IMR-90 (cell line): ENCODE measurements at regions of chr4 and their contacts with region 1.

Region 1: DNA sequence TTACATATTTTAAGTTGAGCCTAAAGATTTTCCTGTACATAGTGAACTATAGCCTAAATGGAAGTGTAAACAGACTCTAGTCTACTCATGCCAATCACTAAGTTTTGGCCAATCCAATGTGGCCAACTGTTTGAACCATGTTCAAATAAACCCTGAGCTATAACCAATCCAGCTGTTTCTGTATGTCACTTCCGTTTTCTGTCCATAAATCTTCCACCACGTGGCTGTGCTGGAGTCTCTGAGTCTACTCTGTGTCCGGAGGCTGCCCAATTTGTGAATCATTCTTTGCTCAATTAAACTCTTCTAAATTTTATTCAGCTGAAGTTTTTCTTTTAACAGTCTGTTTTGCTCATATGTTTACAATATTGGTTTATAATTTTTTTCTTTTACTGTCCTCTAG is 112.4 kb upstream of the BANK1 start:
- DNase-seq: no peak
- ATAC-seq: no peak
- H3K4me3 ChIP-seq: no peak overlapping the region
- H3K27ac ChIP-seq: no peak overlapping the region
- H3K4me1 ChIP-seq: no peaks in the 10 kb centered on the region
- H3K27me3 ChIP-seq: no peaks in the 10 kb centered on the region
- CTCF ChIP-seq: no peak
- POLR2A ChIP-seq: no peak
- RAD21 ChIP-seq: no peak

Region 2: DNA sequence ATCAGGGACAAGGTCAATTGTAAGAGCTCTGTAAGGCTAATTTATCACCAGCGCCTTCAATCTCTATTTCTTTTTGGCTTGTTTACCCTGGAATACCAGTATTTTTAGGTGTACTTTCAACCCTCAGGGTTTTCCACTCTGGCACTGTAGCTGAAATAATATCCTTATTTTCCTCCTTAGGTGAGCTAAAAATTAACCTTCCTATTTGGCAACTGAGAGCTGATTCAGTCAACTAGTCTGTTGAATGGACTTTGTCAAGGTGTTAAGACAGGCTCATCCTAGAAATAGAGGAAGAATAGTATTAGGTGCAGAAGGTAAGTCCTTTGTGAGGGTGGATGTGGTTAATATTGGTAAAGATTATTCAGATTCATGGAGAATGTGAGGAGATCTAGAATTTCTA is 11.1 kb after region 1 on chr4:
- CTCF ChIA-PET with region 1: interaction called, 10 read pairs
- POLR2A ChIA-PET with region 1: no interaction called
- dilution Hi-C with region 1: no loop called
- in situ Hi-C with region 1: no loop called
- intact Hi-C with region 1: no loop called
- DNase-seq: no peak
- ATAC-seq: no peak
- H3K4me3 ChIP-seq: no peak overlapping the region
- H3K27ac ChIP-seq: no peak overlapping the region
- H3K4me1 ChIP-seq: no peaks in the 10 kb centered on the region
- H3K27me3 ChIP-seq: no peaks in the 10 kb centered on the region; the same call in 1 of the 2 replicates
- CTCF ChIP-seq: no peak
- POLR2A ChIP-seq: no peak
- RAD21 ChIP-seq: no peak